ENCODE measurements at regions of chrX and their contacts with region 1.

Region 1: DNA sequence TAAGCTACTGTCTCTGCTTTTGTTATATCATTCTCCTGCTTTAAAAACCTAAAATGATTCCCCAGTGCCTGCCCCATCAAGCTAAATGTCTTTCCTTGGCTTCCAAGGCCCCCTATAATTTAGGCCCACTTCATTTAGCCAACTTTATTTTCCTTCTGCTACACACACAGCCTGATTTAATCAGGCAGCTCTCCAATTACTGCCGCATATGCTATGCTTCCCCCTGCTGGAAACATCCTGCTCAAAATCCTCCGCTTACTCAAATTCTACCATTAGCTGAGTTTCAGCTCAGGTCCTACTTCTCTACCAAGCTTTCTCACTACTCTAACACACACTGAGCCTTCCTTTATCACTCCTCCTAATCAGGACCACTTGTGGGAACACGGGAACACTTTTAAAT is 17.0 kb downstream of the LAMP2 start:
- H3K4me3 ChIP-seq: no peak overlapping the region
- H3K27ac ChIP-seq: no peak overlapping the region
- H3K4me1 ChIP-seq: peaks cover 2% of the 10 kb centered on the region
- CTCF ChIP-seq: peak; percentile 71

Region 2: GRCh38 chrX:119529345-119530276 is 922.5 kb before region 1 on chrX:
- CTCF ChIA-PET with region 1: no interaction called
- POLR2A ChIA-PET with region 1: no interaction called
- H3K4me3 ChIP-seq: no peak overlapping the region
- H3K27ac ChIP-seq: no peak overlapping the region
- H3K4me1 ChIP-seq: no peaks in the 10 kb centered on the region
- CTCF ChIP-seq: no peak

Region 3: DNA sequence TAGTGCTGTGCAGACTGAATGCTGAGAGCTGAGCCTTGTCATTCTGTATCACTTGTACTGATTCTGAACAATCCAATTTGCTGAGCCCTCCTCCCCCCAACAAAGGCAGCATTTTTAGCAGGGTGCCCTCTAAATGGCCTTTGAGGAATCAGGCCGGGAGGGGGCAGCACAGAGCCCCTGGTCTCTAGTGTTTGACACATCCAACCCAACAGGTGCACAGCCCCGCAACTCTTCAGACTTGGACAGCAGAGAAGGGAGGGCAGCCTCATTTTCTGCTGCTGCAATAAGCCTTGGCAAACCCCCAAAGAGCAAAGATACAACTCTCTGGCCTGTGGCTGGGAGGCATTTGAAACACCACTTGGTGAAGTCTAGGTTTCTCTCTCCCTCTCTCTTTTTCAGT is 86.8 kb before region 1 on chrX:
- CTCF ChIA-PET with region 1: interaction called, 10 read pairs
- POLR2A ChIA-PET with region 1: no interaction called
- H3K4me3 ChIP-seq: no peak overlapping the region
- H3K27ac ChIP-seq: no peak overlapping the region
- H3K4me1 ChIP-seq: no peaks in the 10 kb centered on the region
- CTCF ChIP-seq: peak; percentile 22; the same call in 1 of the 2 replicates

Region 4: DNA sequence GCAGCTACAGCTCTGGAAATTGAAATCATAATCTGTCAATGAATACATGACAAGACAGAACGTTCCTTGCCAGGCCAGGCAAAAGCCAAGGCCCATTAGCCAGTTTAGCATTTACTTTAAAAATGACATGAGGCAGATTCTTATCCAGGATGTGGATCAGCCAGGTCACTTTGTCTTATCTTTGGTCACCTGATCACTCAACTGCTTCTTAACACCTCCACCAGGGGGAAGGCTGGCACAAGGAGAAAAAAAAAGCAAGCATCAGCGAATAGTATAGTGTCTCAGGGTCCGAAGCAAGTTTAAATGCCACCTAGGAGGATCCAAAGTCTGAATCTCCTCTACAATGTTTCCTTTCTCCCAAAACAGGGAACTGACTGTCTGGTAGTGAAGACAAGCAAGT is 71.4 kb before region 1 on chrX:
- CTCF ChIA-PET with region 1: interaction called, 11 read pairs
- POLR2A ChIA-PET with region 1: no interaction called
- H3K4me3 ChIP-seq: no peak overlapping the region
- H3K27ac ChIP-seq: no peak overlapping the region
- H3K4me1 ChIP-seq: no peaks in the 10 kb centered on the region
- CTCF ChIP-seq: no peak

Region 5: DNA sequence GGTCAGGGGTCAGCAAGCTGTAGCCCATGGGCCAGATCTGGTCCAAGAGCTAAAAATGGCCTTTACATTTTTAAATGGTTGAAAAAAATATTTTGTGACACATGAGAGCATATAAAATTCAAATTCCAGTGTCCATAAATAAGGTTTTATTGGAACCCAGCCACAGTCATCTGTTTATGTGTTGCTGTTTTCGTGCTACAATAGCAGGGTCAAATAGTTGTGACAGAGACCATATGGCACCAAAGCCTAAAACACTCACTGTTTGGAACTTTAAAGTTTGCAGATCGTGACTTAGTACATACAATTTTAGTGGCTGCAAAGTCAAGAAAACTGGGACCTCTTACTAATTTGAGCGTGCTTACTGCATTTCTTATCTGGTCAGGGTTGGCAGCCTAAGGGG is 12.2 kb before region 1 on chrX:
- CTCF ChIA-PET with region 1: interaction called, 10 read pairs
- POLR2A ChIA-PET with region 1: no interaction called
- H3K4me3 ChIP-seq: no peak overlapping the region
- H3K27ac ChIP-seq: no peak overlapping the region
- H3K4me1 ChIP-seq: no peaks in the 10 kb centered on the region
- CTCF ChIP-seq: no peak

Region 6: DNA sequence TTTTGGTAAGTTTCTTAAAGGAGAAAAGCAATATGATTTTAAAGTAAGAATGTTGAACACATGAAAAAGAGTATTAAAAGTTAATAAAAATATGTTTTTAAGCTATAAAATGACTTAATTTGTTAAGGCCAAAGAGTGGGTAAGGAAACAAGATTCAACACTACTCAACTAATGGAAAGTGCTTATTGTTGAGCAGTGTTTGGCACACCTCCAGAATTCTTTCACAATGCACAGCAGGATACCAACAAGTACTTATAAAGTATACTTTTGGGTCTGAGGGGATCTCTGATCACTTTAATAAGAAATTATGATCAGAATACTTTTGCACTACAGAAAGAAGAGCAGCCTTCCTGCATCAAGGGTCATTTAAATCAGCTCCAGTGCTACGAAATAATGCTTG is 11.1 kb after region 1 on chrX:
- CTCF ChIA-PET with region 1: interaction called, 28 read pairs
- POLR2A ChIA-PET with region 1: interaction called, 3 read pairs
- H3K4me3 ChIP-seq: no peak overlapping the region
- H3K27ac ChIP-seq: no peak overlapping the region
- H3K4me1 ChIP-seq: peaks cover 21% of the 10 kb centered on the region
- CTCF ChIP-seq: no peak

Region 7: DNA sequence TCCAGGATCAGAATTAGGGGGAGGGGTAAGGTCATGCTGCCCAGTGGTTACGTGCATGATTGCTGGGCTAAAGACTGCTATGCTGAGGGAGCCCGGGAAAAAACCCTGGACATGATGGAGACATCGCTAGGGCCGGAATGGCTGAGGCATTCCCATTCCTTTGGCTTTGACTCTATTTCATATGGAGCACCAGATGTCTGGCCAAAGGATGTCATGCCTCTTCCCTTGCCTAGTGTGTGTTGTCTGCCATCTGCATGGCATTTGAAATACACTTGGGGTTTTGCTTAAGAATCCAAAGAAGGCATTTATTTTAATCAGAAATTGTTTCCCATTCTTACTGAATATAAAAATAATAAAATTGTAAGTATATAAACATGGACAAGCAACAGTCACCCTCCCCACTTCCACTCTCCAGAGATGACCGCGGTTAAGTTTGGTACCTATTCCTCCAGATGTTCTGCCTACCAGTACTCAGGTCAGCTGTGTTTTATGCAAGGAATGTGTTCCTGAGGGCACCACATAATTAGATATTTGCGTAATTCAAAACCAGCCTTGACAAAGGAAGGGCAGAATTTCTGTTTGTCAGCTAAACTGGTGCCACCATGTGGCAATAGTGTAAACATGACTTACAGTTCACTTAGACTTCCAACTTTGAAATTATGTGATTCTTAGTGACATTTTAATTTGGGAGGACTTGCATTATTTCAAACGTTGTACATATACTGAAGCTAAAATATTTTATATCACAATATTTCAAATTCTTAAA is 317.6 kb after region 1 on chrX:
- CTCF ChIA-PET with region 1: no interaction called
- POLR2A ChIA-PET with region 1: no interaction called
- H3K4me3 ChIP-seq: no peak overlapping the region
- H3K27ac ChIP-seq: no peak overlapping the region
- H3K4me1 ChIP-seq: no peaks in the 10 kb centered on the region
- CTCF ChIP-seq: no peak

Measured in HEK293 (cell line).